ENCODE measurements at regions of chr10 and their contacts with region 1.

Region 1: GRCh38 chr10:102503281-102504220 is at the start of gene SUFU:
- DNase-seq: peak; percentile 99
- ATAC-seq: peak; percentile 72
- H3K4me3 ChIP-seq: peak within 1 kb of the TSS; percentile 86 to 99 (median 92)
- H3K4me3 Mint-ChIP-seq: no peak within 1 kb of the TSS
- H3K27ac ChIP-seq: peak within 1 kb of the TSS; percentile 71 to 78
- H3K27ac Mint-ChIP-seq: peak within 1 kb of the TSS; percentile 86
- H3K4me1 ChIP-seq: peaks cover 24 to 28% of the 10 kb centered on the region in 2 donors
- H3K4me1 Mint-ChIP-seq: peaks cover 25% of the 10 kb centered on the region
- H3K27me3 ChIP-seq: no peaks in the 10 kb centered on the region
- H3K27me3 Mint-ChIP-seq: no peaks in the 10 kb centered on the region
- CTCF ChIP-seq: peak; percentile 93
- total RNA-seq, gene SUFU: 13.3 and 16.7 TPM in 2 replicates

Region 2: DNA sequence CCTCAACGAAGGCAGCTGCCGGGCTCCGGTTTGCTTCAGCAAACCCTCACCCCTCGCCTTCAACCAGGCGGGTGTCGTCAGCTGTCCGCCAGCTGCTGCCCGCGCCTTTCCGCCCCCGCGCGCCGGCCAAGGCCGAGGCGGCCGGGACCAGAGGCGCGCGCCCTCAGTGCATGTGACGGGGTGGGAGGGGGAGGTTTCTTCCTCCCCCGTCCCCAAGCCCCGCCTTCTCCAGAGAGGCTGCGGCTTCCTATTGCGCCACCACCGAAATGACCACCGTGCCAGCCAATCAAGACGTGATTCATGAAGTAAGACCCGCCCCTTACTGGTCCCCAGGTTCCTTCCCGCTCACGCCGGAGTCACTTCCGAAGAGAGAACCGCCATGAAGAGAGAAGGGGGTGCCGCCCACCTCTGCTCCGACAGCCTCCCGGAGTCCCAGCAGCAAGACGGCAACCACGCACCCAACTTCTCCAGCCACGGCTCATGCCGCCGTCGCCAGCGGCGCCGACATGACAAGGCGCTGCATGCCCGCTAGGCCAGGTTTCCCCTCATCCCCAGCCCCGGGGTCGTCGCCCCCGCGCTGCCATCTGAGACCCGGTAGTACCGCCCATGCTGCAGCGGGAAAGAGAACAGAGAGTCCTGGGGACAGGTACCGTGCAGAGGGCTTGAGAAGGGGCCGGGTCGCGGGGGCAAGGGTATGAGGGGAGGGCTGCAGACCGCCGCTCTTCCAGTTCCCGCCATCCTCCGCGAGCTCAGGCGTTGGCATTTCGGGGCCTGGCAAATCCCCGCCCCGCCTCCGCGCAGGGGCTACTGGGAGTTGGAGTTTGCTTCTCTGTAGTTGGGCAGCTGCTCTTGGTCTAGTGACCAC is 1590.7 kb before region 1 on chr10 and contains the start of gene SLF2:
- CTCF ChIA-PET with region 1: no interaction called
- POLR2A ChIA-PET with region 1: no interaction called
- intact Hi-C with region 1: loop called (anchors 2 kb)
- DNase-seq: peak; percentile 97
- ATAC-seq: peak; percentile 97
- H3K4me3 ChIP-seq: peak within 1 kb of the TSS; percentile 66 to 94 (median 90)
- H3K4me3 Mint-ChIP-seq: peak within 1 kb of the TSS; percentile 99
- H3K27ac ChIP-seq: peak within 1 kb of the TSS; percentile 66 to 90
- H3K27ac Mint-ChIP-seq: peak within 1 kb of the TSS; percentile 97
- H3K4me1 ChIP-seq: peaks cover 20% of the 10 kb centered on the region in 2 donors
- H3K4me1 Mint-ChIP-seq: peaks cover 34% of the 10 kb centered on the region
- H3K27me3 ChIP-seq: no peaks in the 10 kb centered on the region
- H3K27me3 Mint-ChIP-seq: no peaks in the 10 kb centered on the region
- CTCF ChIP-seq: no peak
- total RNA-seq, gene SLF2: 65.6 and 66.7 TPM in 2 replicates

Region 3: DNA sequence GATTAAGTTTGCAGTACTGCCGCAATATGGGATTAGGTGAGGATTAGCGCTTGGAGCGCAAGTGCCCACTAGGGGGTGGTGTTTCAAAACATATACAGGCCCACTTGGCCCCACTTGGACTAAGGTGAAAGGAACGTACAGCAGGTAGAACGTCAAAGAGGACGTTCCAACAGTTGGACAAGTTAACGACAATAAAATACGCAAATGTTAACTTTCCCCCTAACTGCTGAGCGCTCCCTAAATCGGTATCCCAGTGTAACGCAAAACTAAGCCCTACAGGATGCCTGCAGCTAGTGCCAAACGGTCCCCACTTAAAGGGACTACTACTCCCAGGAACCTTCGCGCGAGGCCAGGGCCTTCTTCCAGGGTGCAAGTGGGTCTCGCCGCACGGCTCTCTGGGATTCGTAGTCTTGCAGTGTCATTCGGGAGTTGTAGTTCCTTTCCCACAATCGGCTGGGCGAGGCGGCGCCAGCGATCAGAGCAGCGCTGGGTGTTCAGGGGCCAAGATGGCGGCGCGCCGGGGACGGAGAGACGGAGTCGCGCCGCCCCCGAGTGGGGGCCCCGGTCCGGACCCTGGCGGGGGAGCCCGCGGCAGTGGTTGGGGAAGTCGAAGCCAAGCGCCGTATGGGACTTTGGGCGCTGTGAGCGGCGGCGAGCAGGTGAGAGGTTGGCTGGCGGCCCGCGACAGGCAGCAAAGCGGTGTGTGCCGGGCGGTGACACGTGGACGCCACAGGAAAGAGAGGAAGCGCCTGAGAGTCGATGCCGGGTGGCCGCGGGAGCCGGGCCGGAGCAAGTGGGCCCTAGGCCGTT is 370.8 kb before region 1 on chr10 and contains the start of gene PPRC1:
- CTCF ChIA-PET with region 1: no interaction called
- POLR2A ChIA-PET with region 1: no interaction called
- intact Hi-C with region 1: loop called (anchors 1 kb)
- DNase-seq: peak; percentile 98
- ATAC-seq: peak; percentile 94
- H3K4me3 ChIP-seq: peak within 1 kb of the TSS; percentile 70 to 97 (median 82)
- H3K4me3 Mint-ChIP-seq: peak within 1 kb of the TSS; percentile 94
- H3K27ac ChIP-seq: peak within 1 kb of the TSS; percentile 79 to 88
- H3K27ac Mint-ChIP-seq: peak within 1 kb of the TSS; percentile 94
- H3K4me1 ChIP-seq: peaks cover 18 to 25% of the 10 kb centered on the region in 2 donors
- H3K4me1 Mint-ChIP-seq: peaks cover 36% of the 10 kb centered on the region
- H3K27me3 ChIP-seq: no peaks in the 10 kb centered on the region
- H3K27me3 Mint-ChIP-seq: no peaks in the 10 kb centered on the region
- CTCF ChIP-seq: peak; percentile 96
- total RNA-seq, gene PPRC1: 35.3 and 36.3 TPM in 2 replicates

Region 4: GRCh38 chr10:102394079-102394800 is 109.3 kb before region 1 on chr10:
- CTCF ChIA-PET with region 1: interaction called, 6 read pairs
- POLR2A ChIA-PET with region 1: interaction called, 8 read pairs
- intact Hi-C with region 1: loop called (anchors 1 kb)
- DNase-seq: peak; percentile 100
- ATAC-seq: peak; percentile 76
- H3K4me3 ChIP-seq: peak overlapping the region; percentile 86 to 100 (median 99)
- H3K4me3 Mint-ChIP-seq: peak overlapping the region; percentile 95
- H3K27ac ChIP-seq: peak overlapping the region; percentile 98 to 100
- H3K27ac Mint-ChIP-seq: peak overlapping the region; percentile 99
- H3K4me1 ChIP-seq: peaks cover 35 to 44% of the 10 kb centered on the region in 2 donors
- H3K4me1 Mint-ChIP-seq: peaks cover 41% of the 10 kb centered on the region
- H3K27me3 ChIP-seq: no peaks in the 10 kb centered on the region
- H3K27me3 Mint-ChIP-seq: no peaks in the 10 kb centered on the region
- CTCF ChIP-seq: peak; percentile 38

Region 5: GRCh38 chr10:102432162-102432950 is 71.2 kb before region 1 on chr10 and contains the start of gene CUEDC2:
- CTCF ChIA-PET with region 1: no interaction called
- POLR2A ChIA-PET with region 1: interaction called, 6 read pairs
- intact Hi-C with region 1: loop called (anchors 1 kb)
- DNase-seq: peak; percentile 96
- ATAC-seq: peak; percentile 98
- H3K4me3 ChIP-seq: peak within 1 kb of the TSS; percentile 54 to 93 (median 90)
- H3K4me3 Mint-ChIP-seq: peak within 1 kb of the TSS; percentile 96
- H3K27ac ChIP-seq: peak within 1 kb of the TSS; percentile 28 to 75
- H3K27ac Mint-ChIP-seq: peak within 1 kb of the TSS; percentile 91
- H3K4me1 ChIP-seq: peaks cover 26 to 42% of the 10 kb centered on the region in 2 donors
- H3K4me1 Mint-ChIP-seq: peaks cover 37% of the 10 kb centered on the region
- H3K27me3 ChIP-seq: no peaks in the 10 kb centered on the region
- H3K27me3 Mint-ChIP-seq: no peaks in the 10 kb centered on the region
- CTCF ChIP-seq: no peak
- total RNA-seq, gene CUEDC2: 35.6 and 37.0 TPM in 2 replicates

Region 6: DNA sequence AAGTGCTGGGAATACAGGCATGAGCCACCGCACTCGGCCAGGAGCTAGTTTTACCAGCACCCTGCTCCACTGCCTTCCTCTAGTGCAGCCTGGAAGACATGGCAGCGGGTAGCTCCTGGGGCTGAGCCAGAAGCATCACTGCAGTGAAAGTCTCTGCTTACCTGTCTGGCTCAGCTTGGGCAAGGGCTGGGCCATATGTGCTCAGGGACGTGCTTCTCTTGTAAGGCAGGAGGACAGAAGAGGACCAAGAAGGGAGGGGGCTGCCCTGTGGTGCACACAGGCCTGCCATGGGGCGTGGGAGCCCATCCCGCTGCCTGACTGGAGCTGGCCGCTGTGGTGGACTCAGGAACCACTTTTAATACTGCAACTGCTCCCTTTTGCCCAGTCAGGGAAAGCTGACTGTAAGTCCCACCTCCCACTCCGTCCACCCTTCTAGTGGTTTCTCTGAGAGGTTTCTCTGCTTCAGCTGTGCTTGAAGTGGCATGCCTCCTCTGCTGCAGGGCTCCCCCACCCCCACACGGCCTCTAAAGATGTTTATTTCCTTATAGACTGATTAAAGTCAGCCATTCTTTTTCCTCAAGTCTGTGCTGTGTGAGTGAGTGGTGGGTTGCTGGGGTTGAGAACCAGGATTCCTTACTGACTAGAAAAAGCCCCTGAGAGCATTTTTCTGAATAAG is 26.9 kb before region 1 on chr10:
- CTCF ChIA-PET with region 1: interaction called, 5 read pairs
- POLR2A ChIA-PET with region 1: no interaction called
- intact Hi-C with region 1: loop called (anchors 1 kb)
- DNase-seq: no peak
- ATAC-seq: no peak
- H3K4me3 ChIP-seq: no peak overlapping the region
- H3K4me3 Mint-ChIP-seq: no peak overlapping the region
- H3K27ac ChIP-seq: no peak overlapping the region
- H3K27ac Mint-ChIP-seq: no peak overlapping the region
- H3K4me1 ChIP-seq: peaks cover 0 to 7% of the 10 kb centered on the region in 2 donors
- H3K4me1 Mint-ChIP-seq: peaks cover 7% of the 10 kb centered on the region
- H3K27me3 ChIP-seq: no peaks in the 10 kb centered on the region
- H3K27me3 Mint-ChIP-seq: no peaks in the 10 kb centered on the region
- CTCF ChIP-seq: no peak

Region 7: DNA sequence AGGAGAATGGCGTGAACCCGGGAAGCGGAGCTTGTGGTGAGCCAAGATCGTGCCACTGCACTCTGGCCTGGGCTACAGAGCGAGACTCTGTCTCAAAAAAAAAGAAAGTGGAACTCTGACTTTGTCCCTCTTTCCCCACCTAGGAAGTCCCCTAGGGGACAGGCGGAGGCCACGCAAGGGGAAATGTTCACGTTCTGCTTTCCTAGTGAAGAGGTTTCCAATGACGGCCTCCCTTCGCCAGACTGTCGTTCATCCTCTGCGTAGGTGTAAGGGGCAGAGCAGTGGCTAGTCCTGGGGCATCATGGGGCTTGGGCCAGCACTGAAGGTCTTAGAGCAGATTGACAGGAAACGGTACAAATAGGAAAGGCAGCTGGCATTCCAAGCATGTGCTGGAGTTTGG is 30.8 kb after region 1 on chr10:
- CTCF ChIA-PET with region 1: no interaction called
- POLR2A ChIA-PET with region 1: no interaction called
- intact Hi-C with region 1: no loop called
- DNase-seq: no peak
- ATAC-seq: no peak
- H3K4me3 ChIP-seq: no peak overlapping the region
- H3K4me3 Mint-ChIP-seq: no peak overlapping the region
- H3K27ac ChIP-seq: no peak overlapping the region
- H3K27ac Mint-ChIP-seq: no peak overlapping the region
- H3K4me1 ChIP-seq: peaks cover 5 to 8% of the 10 kb centered on the region in 2 donors
- H3K4me1 Mint-ChIP-seq: peaks cover 18% of the 10 kb centered on the region
- H3K27me3 ChIP-seq: no peaks in the 10 kb centered on the region
- H3K27me3 Mint-ChIP-seq: no peaks in the 10 kb centered on the region
- CTCF ChIP-seq: no peak

Region 8: GRCh38 chr10:102713814-102714620 is 210.5 kb after region 1 on chr10 and contains the start of gene ARL3:
- CTCF ChIA-PET with region 1: interaction called, 7 read pairs
- POLR2A ChIA-PET with region 1: interaction called, 3 read pairs
- intact Hi-C with region 1: loop called (anchors 2 kb)
- DNase-seq: peak; percentile 96
- ATAC-seq: peak; percentile 87
- H3K4me3 ChIP-seq: peak within 1 kb of the TSS; percentile 67 to 94 (median 70)
- H3K4me3 Mint-ChIP-seq: peak within 1 kb of the TSS; percentile 92
- H3K27ac ChIP-seq: peak within 1 kb of the TSS; percentile 64 to 92
- H3K27ac Mint-ChIP-seq: peak within 1 kb of the TSS; percentile 93
- H3K4me1 ChIP-seq: peaks cover 15 to 21% of the 10 kb centered on the region in 2 donors
- H3K4me1 Mint-ChIP-seq: peaks cover 36% of the 10 kb centered on the region
- H3K27me3 ChIP-seq: no peaks in the 10 kb centered on the region
- H3K27me3 Mint-ChIP-seq: no peaks in the 10 kb centered on the region
- CTCF ChIP-seq: peak; percentile 72
- total RNA-seq, gene ARL3: 5.5 and 6.3 TPM in 2 replicates

Measured in B cell (primary cell).